ENCODE measurements at regions of chr5 and their contacts with region 1.

Region 1: GRCh38 chr5:141326088-141326854 is 4.0 kb upstream of the PCDHGA1 start:
- DNase-seq: peak; percentile 68
- H3K4me3 ChIP-seq: peak overlapping the region; percentile 41 to 57 (median 44)
- H3K27ac ChIP-seq: no peak overlapping the region
- H3K4me1 ChIP-seq: peaks cover 11% of the 10 kb centered on the region
- H3K27me3 ChIP-seq: no peaks in the 10 kb centered on the region
- CTCF ChIP-seq: peak; percentile 62 to 82

Region 2: GRCh38 chr5:141272906-141273305 is 53.4 kb before region 1 on chr5:
- CTCF ChIA-PET with region 1: no interaction called
- dilution Hi-C with region 1: loop called (anchors 5 kb)
- in situ Hi-C with region 1: no loop called
- intact Hi-C with region 1: no loop called
- DNase-seq: no peak
- H3K4me3 ChIP-seq: no peak overlapping the region
- H3K27ac ChIP-seq: no peak overlapping the region
- H3K4me1 ChIP-seq: no peaks in the 10 kb centered on the region
- H3K27me3 ChIP-seq: no peaks in the 10 kb centered on the region
- CTCF ChIP-seq: no peak

Region 3: DNA sequence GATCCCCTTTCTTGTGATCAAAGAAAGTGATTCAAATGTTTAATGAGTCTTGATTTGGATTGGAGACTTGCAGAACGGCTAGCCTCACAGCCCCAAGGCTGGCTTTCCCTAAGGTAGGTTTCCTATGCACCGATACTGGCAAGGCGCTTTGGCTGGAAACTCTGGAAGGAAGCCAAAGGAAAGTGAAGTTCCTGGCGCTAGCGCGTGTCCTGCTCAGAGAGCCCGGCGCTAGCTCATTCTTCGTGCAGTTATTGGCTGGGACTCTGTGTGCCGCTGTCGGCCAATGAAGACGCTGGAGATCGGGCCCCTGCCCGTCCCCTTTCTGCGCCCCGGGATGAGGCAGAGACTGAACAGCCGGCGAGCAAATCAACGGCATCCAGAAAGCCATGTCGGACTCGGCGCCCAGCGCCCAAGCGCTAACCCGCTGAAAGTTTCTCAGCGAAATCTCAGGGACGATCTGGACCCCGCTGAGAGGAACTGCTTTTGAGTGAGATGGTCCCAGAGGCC is 149.4 kb after region 1 on chr5 and contains the start of gene PCDHGC3:
- CTCF ChIA-PET with region 1: no interaction called
- dilution Hi-C with region 1: no loop called
- in situ Hi-C with region 1: no loop called
- intact Hi-C with region 1: loop called (anchors 10 kb)
- DNase-seq: peak; percentile 95
- H3K4me3 ChIP-seq: peak within 1 kb of the TSS; percentile 50 to 73 (median 72)
- H3K27ac ChIP-seq: peak within 1 kb of the TSS; percentile 79
- H3K4me1 ChIP-seq: peaks cover 25% of the 10 kb centered on the region
- H3K27me3 ChIP-seq: no peaks in the 10 kb centered on the region
- CTCF ChIP-seq: peak; percentile 14 to 46
- total RNA-seq, gene PCDHGC3: 74.7 to 76.3 TPM

Measured in mammary epithelial cell (primary cell).